H1 (cell line): ENCODE measurements at regions of chr13 and their contacts with region 1.

Region 1: GRCh38 chr13:99656092-99656745 is 154.9 kb downstream of the TM9SF2 start:
- DNase-seq: peak; percentile 46 to 96
- H3K4me3 ChIP-seq: peak overlapping the region in 1 of 4 experiments; percentile 16; a peak in 1 of 8 replicates
- H3K27ac ChIP-seq: no peak overlapping the region
- H3K4me1 ChIP-seq: peaks cover 10 to 24% (median 19%) of the 10 kb centered on the region in 4 experiments
- H3K27me3 ChIP-seq: no peaks in the 10 kb centered on the region
- CTCF ChIP-seq: peak; percentile 92 to 98 (median 97)
- EP300 ChIP-seq: no peak
- POLR2A ChIP-seq: no peak
- RAD21 ChIP-seq: peak; percentile 99

Region 2: GRCh38 chr13:99610702-99611289 is 45.4 kb before region 1 on chr13:
- CTCF ChIA-PET with region 1: interaction called, 12 read pairs
- POLR2A ChIA-PET with region 1: no interaction called
- DNase-seq: no peak
- H3K4me3 ChIP-seq: no peak overlapping the region
- H3K27ac ChIP-seq: no peak overlapping the region
- H3K4me1 ChIP-seq: peaks cover 3 to 9% (median 4%) of the 10 kb centered on the region in 4 experiments; a peak in 6 of 7 replicates
- H3K27me3 ChIP-seq: no peaks in the 10 kb centered on the region
- CTCF ChIP-seq: peak in 2 of 3 experiments; percentile 24 to 41; a peak in 3 of 4 replicates
- EP300 ChIP-seq: no peak
- POLR2A ChIP-seq: no peak
- RAD21 ChIP-seq: peak; percentile 16 to 26; a peak in 2 of 4 replicates

Region 3: DNA sequence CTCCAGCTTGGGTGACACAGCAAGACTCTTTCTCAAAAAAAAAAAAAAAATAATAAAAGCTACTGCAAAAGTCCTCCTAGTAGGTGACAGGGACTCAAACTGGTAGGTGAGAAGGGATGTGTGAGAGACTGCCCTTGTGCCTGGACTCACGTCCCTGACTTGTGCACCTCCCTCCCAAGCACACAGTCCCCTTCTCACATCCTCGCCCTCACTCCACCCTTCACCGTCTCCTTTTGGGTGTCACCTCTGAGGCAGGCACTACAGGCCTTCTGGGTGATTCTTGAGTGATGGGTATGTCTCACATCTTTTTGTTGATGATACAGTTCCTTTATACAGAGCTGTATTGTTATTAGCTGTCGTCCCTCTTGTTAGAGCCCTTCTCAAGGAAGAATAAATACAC is 15.5 kb after region 1 on chr13:
- CTCF ChIA-PET with region 1: interaction called, 24 read pairs
- POLR2A ChIA-PET with region 1: interaction called, 12 read pairs
- DNase-seq: peak in 1 of 2 experiments; percentile 41
- H3K4me3 ChIP-seq: no peak overlapping the region
- H3K27ac ChIP-seq: no peak overlapping the region
- H3K4me1 ChIP-seq: no peaks in the 10 kb centered on the region; a peak in 2 of 7 replicates
- H3K27me3 ChIP-seq: no peaks in the 10 kb centered on the region
- CTCF ChIP-seq: no peak
- EP300 ChIP-seq: no peak
- POLR2A ChIP-seq: no peak
- RAD21 ChIP-seq: no peak

Region 4: GRCh38 chr13:99740251-99740979 is 84.2 kb after region 1 on chr13:
- CTCF ChIA-PET with region 1: interaction called, 13 read pairs
- POLR2A ChIA-PET with region 1: interaction called, 4 read pairs
- DNase-seq: peak in 1 of 2 experiments; percentile 28
- H3K4me3 ChIP-seq: no peak overlapping the region
- H3K27ac ChIP-seq: no peak overlapping the region
- H3K4me1 ChIP-seq: peaks cover 6 to 17% (median 15%) of the 10 kb centered on the region in 4 experiments; a peak in 6 of 7 replicates
- H3K27me3 ChIP-seq: no peaks in the 10 kb centered on the region
- CTCF ChIP-seq: no peak
- EP300 ChIP-seq: no peak
- POLR2A ChIP-seq: no peak
- RAD21 ChIP-seq: no peak

Region 5: DNA sequence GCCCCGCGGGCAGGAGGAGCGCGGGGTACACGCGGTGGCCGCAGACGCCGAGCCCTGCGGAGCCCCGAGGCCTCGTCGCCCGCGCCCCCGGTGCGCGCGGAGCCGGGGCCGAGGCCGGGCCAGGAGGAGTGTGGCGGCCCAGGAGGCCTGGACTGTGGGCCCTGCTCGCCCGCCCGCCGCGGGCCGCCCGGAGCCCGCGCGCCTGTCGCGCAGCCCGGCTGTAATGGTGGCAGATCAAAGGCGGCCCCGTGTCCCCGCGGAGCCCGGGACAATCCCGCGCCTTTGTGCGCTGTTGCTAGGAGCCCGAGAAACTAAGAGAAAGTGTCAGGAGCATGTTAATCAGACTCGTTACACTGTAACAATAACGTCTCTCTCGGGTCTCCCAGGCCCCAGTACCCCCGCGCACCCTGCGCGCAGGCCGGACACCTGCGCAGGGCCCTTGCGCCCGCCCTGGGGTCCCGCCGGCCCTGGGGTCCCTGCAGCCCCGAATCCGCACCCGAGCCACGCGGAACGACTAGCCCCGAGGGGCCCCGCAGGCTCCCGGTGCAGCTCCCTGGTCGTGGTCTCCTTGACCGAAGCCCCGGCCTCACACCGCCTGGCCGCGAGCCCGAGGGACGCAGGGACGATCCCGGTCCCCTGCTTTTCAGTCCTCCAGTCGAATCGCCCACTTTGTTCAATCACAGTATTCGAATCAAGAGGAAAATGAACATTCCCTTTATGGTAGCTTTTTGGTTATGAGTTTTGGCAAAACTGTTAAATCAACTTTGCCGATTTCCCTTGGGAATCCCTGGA is 240.0 kb after region 1 on chr13:
- CTCF ChIA-PET with region 1: interaction called, 59 read pairs
- POLR2A ChIA-PET with region 1: interaction called, 3 read pairs
- DNase-seq: peak in 1 of 2 experiments; percentile 65
- H3K4me3 ChIP-seq: peak overlapping the region; percentile 25 to 54 (median 34); a peak in 5 of 8 replicates
- H3K27ac ChIP-seq: no peak overlapping the region
- H3K4me1 ChIP-seq: peaks cover 9 to 29% (median 18%) of the 10 kb centered on the region in 4 experiments
- H3K27me3 ChIP-seq: peaks cover 0 to 24% (median 19%) of the 10 kb centered on the region in 4 experiments; a peak in 5 of 7 replicates
- CTCF ChIP-seq: no peak
- EP300 ChIP-seq: no peak
- POLR2A ChIP-seq: no peak
- RAD21 ChIP-seq: no peak

Region 6: GRCh38 chr13:99935777-99936176 is 279.6 kb after region 1 on chr13:
- CTCF ChIA-PET with region 1: interaction called, 15 read pairs
- POLR2A ChIA-PET with region 1: no interaction called
- DNase-seq: peak in 1 of 2 experiments; percentile 60
- H3K4me3 ChIP-seq: no peak overlapping the region
- H3K27ac ChIP-seq: no peak overlapping the region
- H3K4me1 ChIP-seq: peaks cover 0 to 4% (median 2%) of the 10 kb centered on the region in 4 experiments; a peak in 3 of 7 replicates
- H3K27me3 ChIP-seq: no peaks in the 10 kb centered on the region
- CTCF ChIP-seq: peak; percentile 34 to 71 (median 52); a peak in 3 of 4 replicates
- EP300 ChIP-seq: no peak
- POLR2A ChIP-seq: no peak
- RAD21 ChIP-seq: peak; percentile 21 to 49; a peak in 2 of 4 replicates

Region 7: GRCh38 chr13:99980201-99980823 is 324.1 kb after region 1 on chr13:
- CTCF ChIA-PET with region 1: interaction called, 12 read pairs
- POLR2A ChIA-PET with region 1: no interaction called
- DNase-seq: no peak
- H3K4me3 ChIP-seq: peak overlapping the region; percentile 73 to 96 (median 94)
- H3K27ac ChIP-seq: peak overlapping the region; percentile 94
- H3K4me1 ChIP-seq: peaks cover 0 to 20% (median 15%) of the 10 kb centered on the region in 4 experiments; a peak in 6 of 7 replicates
- H3K27me3 ChIP-seq: peaks cover 0 to 16% (median 4%) of the 10 kb centered on the region in 4 experiments; a peak in 4 of 7 replicates
- CTCF ChIP-seq: peak in 1 of 3 experiments; percentile 4; a peak in 1 of 4 replicates
- EP300 ChIP-seq: no peak
- POLR2A ChIP-seq: no peak; a peak in 2 of 3 replicates
- RAD21 ChIP-seq: peak in 1 of 2 experiments; percentile 28; a peak in 1 of 4 replicates